ENCODE measurements at regions of chr7 and their contacts with region 1.

Region 1: GRCh38 chr7:122528879-122529481 is 169.9 kb downstream of the RNF133 start:
- DNase-seq: peak in 1 of 2 experiments; percentile 6
- H3K4me3 ChIP-seq: no peak overlapping the region
- H3K4me3 Mint-ChIP-seq: no peak overlapping the region
- H3K27ac Mint-ChIP-seq: no peak overlapping the region
- H3K4me1 ChIP-seq: no peaks in the 10 kb centered on the region
- H3K4me1 Mint-ChIP-seq: no peaks in the 10 kb centered on the region
- H3K27me3 ChIP-seq: no peaks in the 10 kb centered on the region
- H3K27me3 Mint-ChIP-seq: peaks cover 2% of the 10 kb centered on the region
- CTCF ChIP-seq: peak; percentile 52

Region 2: DNA sequence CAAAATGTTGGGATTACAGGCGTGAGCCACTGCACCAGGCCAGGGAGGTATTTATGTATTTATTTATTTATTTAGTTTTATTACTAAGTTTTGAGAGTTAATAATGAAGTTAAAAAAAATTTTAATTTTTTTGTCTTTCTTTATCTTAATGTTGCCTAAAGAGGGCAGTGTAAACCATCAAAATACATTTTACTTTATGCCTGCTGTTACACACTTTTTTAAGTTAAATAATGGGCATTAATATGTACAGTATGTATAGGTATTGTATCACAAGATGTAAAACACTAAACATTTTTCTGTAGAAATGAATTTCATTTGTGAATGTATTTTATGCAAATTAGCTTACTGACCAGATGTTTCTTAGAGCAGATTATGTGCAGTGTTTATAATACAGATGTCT is 514.3 kb before region 1 on chr7:
- CTCF ChIA-PET with region 1: no interaction called
- POLR2A ChIA-PET with region 1: no interaction called
- intact Hi-C with region 1: loop called (anchors 1 kb)
- DNase-seq: no peak
- H3K4me3 ChIP-seq: no peak overlapping the region
- H3K4me3 Mint-ChIP-seq: no peak overlapping the region
- H3K27ac Mint-ChIP-seq: no peak overlapping the region
- H3K4me1 ChIP-seq: no peaks in the 10 kb centered on the region
- H3K4me1 Mint-ChIP-seq: no peaks in the 10 kb centered on the region
- H3K27me3 ChIP-seq: no peaks in the 10 kb centered on the region; the same call in 1 of the 2 replicates
- H3K27me3 Mint-ChIP-seq: peaks cover 5% of the 10 kb centered on the region
- CTCF ChIP-seq: peak in 1 of 2 experiments; percentile 15

Region 3: DNA sequence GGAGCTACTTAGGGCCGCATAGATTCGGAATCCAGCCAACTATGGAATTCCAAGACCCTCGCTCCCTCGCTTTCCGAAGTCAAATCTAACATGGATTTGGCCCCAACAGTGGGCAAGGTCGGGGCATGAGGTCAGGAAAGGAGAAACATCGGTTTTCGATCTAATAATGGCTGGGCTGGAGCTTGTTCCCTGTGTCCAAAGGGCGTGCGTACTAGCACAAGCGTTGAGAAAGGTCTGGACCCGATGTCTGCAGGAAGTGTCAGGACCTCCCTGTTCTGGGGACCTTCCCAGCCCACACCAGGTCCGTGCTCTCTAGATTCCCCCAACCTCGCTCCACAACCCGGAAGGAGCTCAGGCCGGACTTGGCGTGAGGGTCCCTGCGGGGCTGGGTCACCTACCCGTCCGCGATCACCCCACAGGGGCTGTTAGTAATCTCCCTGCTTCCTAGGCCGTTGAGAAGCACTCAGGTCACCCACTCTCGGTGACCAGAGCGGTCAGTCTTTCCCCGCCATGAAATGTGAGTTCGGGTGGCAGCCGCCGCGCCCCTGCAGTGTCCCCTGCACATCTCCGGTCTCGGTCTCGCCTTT is 229.3 kb before region 1 on chr7:
- CTCF ChIA-PET with region 1: no interaction called
- POLR2A ChIA-PET with region 1: no interaction called
- intact Hi-C with region 1: loop called (anchors 5 kb)
- DNase-seq: no peak
- H3K4me3 ChIP-seq: no peak overlapping the region
- H3K4me3 Mint-ChIP-seq: no peak overlapping the region
- H3K27ac Mint-ChIP-seq: no peak overlapping the region
- H3K4me1 ChIP-seq: 0 out of 2 replicates have a peak, but pooled peaks cover 3% of the 10 kb centered on the region
- H3K4me1 Mint-ChIP-seq: no peaks in the 10 kb centered on the region
- H3K27me3 ChIP-seq: peaks cover 3% of the 10 kb centered on the region; the same call in 1 of the 2 replicates
- H3K27me3 Mint-ChIP-seq: peaks cover 24% of the 10 kb centered on the region
- CTCF ChIP-seq: no peak

Region 4: DNA sequence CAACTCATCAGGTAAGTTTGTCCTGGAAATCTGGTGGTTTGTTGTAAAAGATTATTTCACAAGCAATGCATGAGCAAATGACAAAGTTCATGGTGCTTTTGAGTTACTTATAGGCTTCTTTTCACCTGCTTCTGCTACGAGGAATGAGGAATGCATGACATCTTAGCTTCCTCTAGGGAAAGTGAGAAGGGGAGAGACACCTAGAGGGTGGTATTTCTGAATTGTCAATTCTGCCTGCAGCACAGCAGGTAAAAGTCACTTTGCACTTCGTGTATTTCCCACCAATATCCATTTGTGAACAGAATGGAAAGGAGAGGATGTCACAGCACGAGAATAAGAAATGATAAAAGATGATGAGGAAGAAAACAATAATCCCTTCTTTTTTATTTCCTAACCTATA is 71.0 kb before region 1 on chr7:
- CTCF ChIA-PET with region 1: no interaction called
- POLR2A ChIA-PET with region 1: no interaction called
- intact Hi-C with region 1: no loop called
- DNase-seq: no peak
- H3K4me3 ChIP-seq: no peak overlapping the region
- H3K4me3 Mint-ChIP-seq: no peak overlapping the region
- H3K27ac Mint-ChIP-seq: no peak overlapping the region
- H3K4me1 ChIP-seq: no peaks in the 10 kb centered on the region
- H3K4me1 Mint-ChIP-seq: no peaks in the 10 kb centered on the region
- H3K27me3 ChIP-seq: no peaks in the 10 kb centered on the region
- H3K27me3 Mint-ChIP-seq: no peaks in the 10 kb centered on the region
- CTCF ChIP-seq: no peak